AG04450 (cell line): ENCODE measurements at regions of chr11 and their contacts with region 1.

Region 1: DNA sequence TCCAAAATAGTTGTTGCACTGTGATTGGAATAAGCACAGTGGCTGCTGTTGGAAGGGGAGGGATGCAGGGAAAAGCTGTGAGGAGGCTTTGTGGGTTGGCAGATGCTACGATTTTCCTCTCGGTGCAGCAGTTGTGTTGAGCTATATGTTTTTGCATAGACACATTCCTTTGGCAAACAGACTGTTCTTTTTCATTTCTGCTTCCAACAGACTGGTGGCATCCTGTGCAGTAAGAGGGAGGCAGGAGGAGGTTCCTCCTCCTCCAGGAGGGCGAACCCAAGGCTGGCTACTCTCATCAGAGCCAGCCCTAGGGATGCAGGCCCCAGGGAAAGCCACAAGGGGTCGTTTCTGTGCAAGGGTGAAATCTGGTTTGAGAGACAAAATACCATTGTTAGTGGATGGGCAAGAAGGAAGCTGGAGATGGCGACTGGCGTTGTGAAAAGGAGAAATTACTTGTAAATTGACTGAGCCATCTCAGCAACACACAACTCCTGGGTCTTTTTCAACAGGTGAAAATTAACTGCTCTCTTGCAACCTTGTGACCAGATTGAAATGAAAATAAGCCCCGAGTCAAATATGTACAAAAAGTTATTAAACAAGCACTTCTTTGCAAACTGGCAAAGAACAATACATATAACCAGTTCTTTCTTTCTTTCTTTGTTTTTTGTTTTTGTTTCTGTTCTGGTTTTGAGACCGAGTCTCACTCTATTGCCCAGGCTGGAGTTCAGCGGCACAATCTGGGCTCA is 26.5 kb upstream of the UBASH3B start:
- DNase-seq: peak; percentile 51
- H3K4me3 ChIP-seq: no peak overlapping the region
- H3K27ac ChIP-seq: peak overlapping the region; percentile 21
- H3K27me3 ChIP-seq: peaks cover 3% of the 10 kb centered on the region
- CTCF ChIP-seq: peak; percentile 98

Region 2: GRCh38 chr11:122617297-122617696 is 11.7 kb before region 1 on chr11:
- CTCF ChIA-PET with region 1: interaction called, 16 read pairs
- POLR2A ChIA-PET with region 1: no interaction called
- DNase-seq: no peak
- H3K4me3 ChIP-seq: no peak overlapping the region
- H3K27ac ChIP-seq: no peak overlapping the region
- H3K27me3 ChIP-seq: peaks cover 15% of the 10 kb centered on the region
- CTCF ChIP-seq: no peak

Region 3: DNA sequence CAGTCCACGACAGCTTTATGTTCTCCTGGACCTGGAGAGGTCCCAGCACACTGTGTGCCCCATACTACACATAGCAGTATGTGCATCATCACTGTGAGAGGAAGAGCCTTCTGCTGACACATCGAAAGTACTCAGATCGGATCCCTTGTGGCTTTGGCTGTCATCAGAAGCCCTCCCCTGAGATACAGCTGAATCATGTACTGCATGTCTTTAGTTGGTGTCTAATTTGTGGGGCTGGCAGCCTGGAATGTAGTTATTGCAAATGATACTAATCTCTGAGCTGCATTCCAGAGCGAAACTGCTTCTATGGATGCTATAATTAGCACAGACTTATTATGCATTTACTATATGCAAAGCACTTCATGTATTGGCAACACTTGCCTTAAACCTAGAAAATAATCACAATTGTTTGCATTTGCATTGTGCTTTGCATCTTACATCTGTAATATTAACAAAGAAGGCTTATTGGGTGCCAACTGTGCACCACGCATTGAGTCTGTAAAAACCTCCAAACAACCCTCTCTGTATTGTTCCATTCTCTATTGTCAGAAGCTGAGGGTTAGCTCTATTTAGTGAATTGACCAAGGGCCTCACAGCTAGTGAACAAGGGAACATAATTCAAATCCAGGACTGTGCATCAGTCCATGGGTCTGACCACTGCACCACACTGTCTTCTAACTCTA is 120.2 kb after region 1 on chr11:
- CTCF ChIA-PET with region 1: interaction called, 19 read pairs
- POLR2A ChIA-PET with region 1: no interaction called
- DNase-seq: peak; percentile 63
- H3K4me3 ChIP-seq: no peak overlapping the region; the same call in 1 of the 2 replicates
- H3K27ac ChIP-seq: peak overlapping the region; percentile 73
- H3K27me3 ChIP-seq: no peaks in the 10 kb centered on the region
- CTCF ChIP-seq: no peak

Region 4: GRCh38 chr11:122796128-122796717 is 167.2 kb after region 1 on chr11:
- CTCF ChIA-PET with region 1: interaction called, 22 read pairs
- POLR2A ChIA-PET with region 1: interaction called, 3 read pairs
- DNase-seq: no peak
- H3K4me3 ChIP-seq: no peak overlapping the region
- H3K27ac ChIP-seq: no peak overlapping the region
- H3K27me3 ChIP-seq: no peaks in the 10 kb centered on the region
- CTCF ChIP-seq: peak; percentile 79

Region 5: GRCh38 chr11:122843281-122844141 is 214.5 kb after region 1 on chr11:
- CTCF ChIA-PET with region 1: interaction called, 503 read pairs
- POLR2A ChIA-PET with region 1: no interaction called
- DNase-seq: no peak
- H3K4me3 ChIP-seq: no peak overlapping the region
- H3K27ac ChIP-seq: no peak overlapping the region
- H3K27me3 ChIP-seq: no peaks in the 10 kb centered on the region
- CTCF ChIP-seq: no peak

Region 6: GRCh38 chr11:123020968-123021367 is 392.0 kb after region 1 on chr11:
- CTCF ChIA-PET with region 1: interaction called, 46 read pairs
- POLR2A ChIA-PET with region 1: no interaction called
- DNase-seq: peak; percentile 29
- H3K4me3 ChIP-seq: no peak overlapping the region
- H3K27ac ChIP-seq: no peak overlapping the region
- H3K27me3 ChIP-seq: peaks cover 25% of the 10 kb centered on the region
- CTCF ChIP-seq: peak; percentile 74